Activated naive CD4-positive, alpha-beta T cell treated with anti-CD3 and anti-CD28 coated beads for 36 hours (primary cell): ENCODE measurements at regions of chr3 and their contacts with region 1.

Region 1: GRCh38 chr3:194333212-194333980 is 17.7 kb downstream of the CPN2 start:
- DNase-seq: peak; percentile 93
- H3K4me3 Mint-ChIP-seq: peak overlapping the region; percentile 68
- H3K27ac Mint-ChIP-seq: no peak overlapping the region
- H3K4me1 Mint-ChIP-seq: peaks cover 11% of the 10 kb centered on the region
- H3K27me3 Mint-ChIP-seq: peaks cover 18% of the 10 kb centered on the region

Region 2: DNA sequence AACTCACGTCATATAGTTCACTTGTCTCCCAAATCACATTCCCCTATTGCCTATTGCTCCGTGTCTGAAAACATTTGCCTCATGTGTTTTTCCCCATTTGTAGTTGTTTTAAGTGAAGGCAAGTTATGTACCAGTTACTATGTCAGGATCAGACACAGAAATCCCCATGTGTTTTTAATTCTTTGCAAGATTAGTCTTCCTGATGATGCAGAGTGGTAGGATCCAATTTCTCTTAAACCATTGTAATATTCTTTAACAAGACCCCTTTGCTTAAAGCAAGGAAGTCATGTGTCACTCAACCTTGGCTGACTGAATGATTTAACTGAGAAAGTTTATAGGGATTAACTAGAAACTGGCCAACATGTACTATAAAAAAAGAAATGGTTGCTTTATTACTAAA is 575.9 kb before region 1 on chr3:
- CTCF ChIA-PET with region 1: no interaction called
- intact Hi-C with region 1: no loop called
- DNase-seq: no peak
- H3K4me3 Mint-ChIP-seq: no peak overlapping the region
- H3K27ac Mint-ChIP-seq: no peak overlapping the region
- H3K4me1 Mint-ChIP-seq: no peaks in the 10 kb centered on the region
- H3K27me3 Mint-ChIP-seq: peaks cover 2% of the 10 kb centered on the region

Region 3: GRCh38 chr3:194344012-194344411 is 10.6 kb after region 1 on chr3:
- CTCF ChIA-PET with region 1: interaction called, 75 read pairs
- intact Hi-C with region 1: no loop called
- DNase-seq: peak; percentile 81
- H3K4me3 Mint-ChIP-seq: no peak overlapping the region
- H3K27ac Mint-ChIP-seq: no peak overlapping the region
- H3K4me1 Mint-ChIP-seq: no peaks in the 10 kb centered on the region
- H3K27me3 Mint-ChIP-seq: no peaks in the 10 kb centered on the region

Region 4: DNA sequence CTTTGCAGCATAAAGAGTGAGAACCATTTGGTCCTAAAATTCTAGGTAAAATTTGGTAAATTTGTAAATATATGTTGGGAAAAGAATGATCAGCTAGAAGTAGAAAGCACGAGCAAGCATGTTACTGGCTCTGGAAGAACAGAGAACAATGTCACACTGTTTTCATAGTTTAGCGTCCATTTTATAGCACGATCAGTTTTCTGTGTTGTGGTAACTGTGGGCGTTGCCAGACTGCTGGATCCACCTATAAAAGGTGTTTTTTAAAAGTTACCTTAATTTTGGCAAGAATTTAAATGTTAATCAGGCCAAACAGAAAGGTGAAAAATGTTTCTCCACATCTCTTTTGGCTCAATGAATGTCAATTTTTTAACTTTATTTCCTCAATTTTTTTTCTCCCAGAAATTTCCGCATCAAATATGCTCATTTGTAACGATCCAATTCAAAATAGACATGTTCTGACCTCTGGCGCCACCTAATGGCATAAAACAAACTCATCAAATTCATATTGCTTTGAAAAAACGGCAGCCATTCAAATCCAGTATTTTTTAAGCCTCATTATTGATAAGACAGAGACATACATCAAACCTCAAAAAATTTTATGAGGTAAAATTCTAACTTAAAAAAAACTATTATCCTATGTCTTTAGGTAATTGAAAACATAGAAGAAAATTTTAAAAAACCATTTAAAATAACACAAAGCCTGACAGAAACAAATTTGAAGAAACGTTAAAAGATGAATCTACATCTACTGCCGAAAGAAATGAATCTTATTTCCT is 71.2 kb after region 1 on chr3:
- CTCF ChIA-PET with region 1: interaction called, 166 read pairs
- intact Hi-C with region 1: loop called (anchors 1 kb)
- DNase-seq: peak; percentile 60
- H3K4me3 Mint-ChIP-seq: no peak overlapping the region
- H3K27ac Mint-ChIP-seq: no peak overlapping the region
- H3K4me1 Mint-ChIP-seq: peaks cover 9% of the 10 kb centered on the region
- H3K27me3 Mint-ChIP-seq: no peaks in the 10 kb centered on the region

Region 5: DNA sequence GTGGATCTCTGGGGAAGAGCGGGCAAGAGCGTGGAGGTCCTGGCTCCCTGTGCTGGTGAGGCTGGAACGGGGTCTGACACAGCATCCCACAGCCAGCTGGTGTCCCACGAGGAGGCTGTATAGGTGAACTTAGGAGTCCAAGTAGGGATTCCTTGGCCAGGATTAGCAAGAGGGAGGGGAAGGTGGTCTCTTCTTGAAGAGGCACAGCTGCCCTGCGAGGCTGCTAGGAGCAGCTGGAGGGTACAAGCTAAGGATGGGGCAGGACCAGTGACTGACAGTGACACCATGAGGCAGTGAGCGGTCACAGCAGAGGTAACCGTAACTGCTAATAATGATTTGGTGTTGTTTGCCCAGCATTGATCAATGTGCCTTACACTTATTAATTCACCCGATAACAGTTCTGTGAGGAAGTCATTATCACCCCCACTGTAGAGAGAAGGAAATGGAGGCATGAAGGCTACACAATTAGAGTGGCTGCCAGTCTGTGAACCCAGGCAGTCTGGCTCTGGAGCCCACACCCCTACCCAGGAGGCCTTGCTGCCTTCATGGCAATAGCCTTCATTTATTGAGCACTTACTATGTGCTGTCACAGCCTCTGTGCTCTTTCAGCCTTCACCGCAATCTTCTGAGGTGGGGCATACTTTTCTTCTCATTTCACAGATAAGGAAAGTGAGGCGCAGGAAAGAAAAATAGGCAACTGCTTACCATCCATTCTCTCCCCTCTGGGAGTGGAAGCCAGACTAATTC is 240.5 kb after region 1 on chr3:
- CTCF ChIA-PET with region 1: interaction called, 5 read pairs
- intact Hi-C with region 1: loop called (anchors 1 kb)
- DNase-seq: peak; percentile 68
- H3K4me3 Mint-ChIP-seq: no peak overlapping the region
- H3K27ac Mint-ChIP-seq: no peak overlapping the region
- H3K4me1 Mint-ChIP-seq: peaks cover 18% of the 10 kb centered on the region
- H3K27me3 Mint-ChIP-seq: peaks cover 19% of the 10 kb centered on the region

Region 6: GRCh38 chr3:194632809-194633348 is 299.5 kb after region 1 on chr3:
- CTCF ChIA-PET with region 1: no interaction called
- intact Hi-C with region 1: loop called (anchors 2 kb)
- DNase-seq: peak; percentile 24
- H3K4me3 Mint-ChIP-seq: peak overlapping the region; percentile 85
- H3K27ac Mint-ChIP-seq: peak overlapping the region; percentile 53
- H3K4me1 Mint-ChIP-seq: peaks cover 6% of the 10 kb centered on the region
- H3K27me3 Mint-ChIP-seq: no peaks in the 10 kb centered on the region

Region 7: DNA sequence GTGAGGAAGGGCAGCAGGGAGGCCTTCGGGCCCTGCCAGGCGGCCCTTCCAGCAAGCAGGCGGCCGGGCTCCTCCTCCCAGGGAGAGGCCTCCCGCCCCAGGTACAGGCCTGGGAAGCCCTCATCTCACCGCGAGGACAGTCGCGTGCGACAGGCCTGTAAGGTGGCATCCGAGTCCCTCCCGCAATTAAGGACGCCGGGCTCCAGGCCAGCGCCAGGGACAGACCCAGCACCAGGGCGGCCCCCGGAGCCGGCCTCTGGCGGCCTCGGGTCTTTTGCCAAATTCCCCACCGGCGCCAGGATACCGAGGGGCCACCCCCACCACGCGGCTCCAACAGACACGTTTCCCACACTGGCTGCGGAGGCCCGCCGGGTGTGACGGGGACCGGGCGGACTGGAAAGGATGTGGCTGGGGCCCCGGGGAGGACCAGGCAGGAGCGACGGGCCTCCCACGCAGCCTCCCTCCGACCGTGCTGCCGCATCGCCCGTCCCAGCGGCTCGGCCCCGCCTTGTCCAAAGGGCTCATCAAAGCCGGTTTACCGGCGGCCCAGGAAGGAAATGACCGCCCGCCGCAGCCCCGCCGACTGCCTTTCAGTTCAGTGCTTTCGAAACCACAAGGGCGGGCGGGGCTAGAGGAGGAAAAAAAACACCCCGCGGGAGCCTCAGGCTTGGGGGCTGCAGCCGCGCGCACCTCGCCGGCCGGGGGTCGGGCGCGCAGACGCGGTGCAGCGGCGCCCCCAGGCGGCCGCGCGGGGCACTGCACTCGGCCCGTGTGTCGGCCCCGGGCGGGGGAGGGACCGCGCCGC is 926.3 kb after region 1 on chr3:
- CTCF ChIA-PET with region 1: no interaction called
- intact Hi-C with region 1: loop called (anchors 5 kb)
- DNase-seq: peak; percentile 79
- H3K4me3 Mint-ChIP-seq: peak overlapping the region; percentile 55
- H3K27ac Mint-ChIP-seq: no peak overlapping the region
- H3K4me1 Mint-ChIP-seq: peaks cover 13% of the 10 kb centered on the region
- H3K27me3 Mint-ChIP-seq: no peaks in the 10 kb centered on the region